GM12878 (cell line): ENCODE measurements at regions of chr7 and their contacts with region 1.

Region 1: DNA sequence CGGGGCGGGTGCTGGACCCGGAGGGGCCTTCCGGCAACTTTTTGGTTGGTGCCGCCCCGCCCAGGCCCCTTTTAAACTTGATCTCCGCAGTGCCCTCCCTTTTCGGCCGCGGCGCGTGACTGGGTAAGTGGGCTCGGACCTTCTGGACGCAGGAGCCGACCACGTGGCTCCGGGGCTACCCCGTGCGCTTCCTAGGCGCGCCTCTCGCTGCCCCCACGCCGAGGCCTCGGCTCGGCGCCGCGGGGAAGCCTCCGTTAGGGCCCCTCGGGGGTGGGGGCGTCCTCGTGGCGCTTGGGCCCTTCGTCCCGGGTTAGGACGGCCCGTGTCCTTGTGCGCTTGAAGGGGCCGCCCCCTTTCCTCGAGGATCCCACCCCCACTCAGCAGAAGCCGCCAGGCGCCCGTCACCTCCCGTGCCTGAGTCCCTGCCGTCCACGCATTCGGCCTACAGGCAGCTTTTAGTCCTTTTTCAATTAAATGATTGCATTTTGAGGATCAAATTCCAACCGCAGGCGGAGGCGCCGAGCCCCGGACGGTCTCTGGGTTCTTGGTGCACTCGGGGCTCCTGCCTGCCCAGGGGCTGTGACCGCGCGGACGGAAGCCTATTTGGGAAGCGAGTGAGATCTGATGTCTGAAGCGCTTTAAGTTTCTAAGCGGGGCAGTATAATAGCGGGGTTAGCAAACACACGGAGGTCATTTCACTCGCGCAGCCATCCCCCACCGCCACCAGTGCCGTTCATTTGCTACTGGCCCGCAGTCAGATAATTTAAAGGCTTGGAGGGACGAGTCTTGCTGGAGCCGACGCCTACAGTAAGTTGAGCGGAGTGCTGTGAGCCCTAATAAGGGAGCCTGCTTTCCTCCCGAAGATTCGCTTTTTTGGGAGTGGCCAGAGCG is 31.8 kb upstream of the TOMM7 start:
- DNase-seq: peak; percentile 63
- ATAC-seq: peak; percentile 84
- H3K4me3 ChIP-seq: peak overlapping the region; percentile 84
- H3K27ac ChIP-seq: peak overlapping the region; percentile 94
- H3K4me1 ChIP-seq: peaks cover 14% of the 10 kb centered on the region
- H3K27me3 ChIP-seq: no peaks in the 10 kb centered on the region
- CTCF ChIP-seq: peak in 1 of 3 experiments; percentile 44; a peak in 1 of 6 replicates
- EP300 ChIP-seq: 0 out of 4 replicates have a peak, but pooled peaks of 1 of the 2 experiments have one; percentile 21
- POLR2A ChIP-seq: peak; percentile 89
- RAD21 ChIP-seq: no peak

Region 2: DNA sequence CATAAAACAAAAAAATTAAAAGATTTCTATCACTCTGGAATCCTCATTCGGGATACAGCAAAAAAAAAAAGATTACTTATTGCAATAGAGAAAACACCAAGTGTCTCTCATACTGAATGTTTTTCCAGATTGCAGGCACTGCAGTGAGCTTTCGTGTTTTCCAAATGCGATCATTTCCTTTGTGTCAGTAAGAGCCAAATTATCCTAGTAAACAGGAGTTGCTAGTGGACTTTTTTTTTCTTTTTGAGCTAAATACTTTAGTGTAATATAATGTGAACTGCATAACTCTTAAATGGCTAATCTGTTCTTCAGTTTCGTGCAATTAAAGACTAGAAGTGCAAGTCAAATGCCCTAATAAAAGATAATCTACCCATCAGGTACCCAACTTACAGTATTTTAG is 12.6 kb after region 1 on chr7:
- CTCF ChIA-PET with region 1: interaction called, 45 read pairs
- POLR2A ChIA-PET with region 1: interaction called, 20 read pairs
- RAD21 ChIA-PET with region 1: interaction called, 46 read pairs
- SMC1A ChIA-PET with region 1: interaction called, 34 read pairs
- in situ Hi-C with region 1: no loop called
- intact Hi-C with region 1: loop called (anchors 1 kb)
- DNase-seq: no peak
- ATAC-seq: no peak
- H3K4me3 ChIP-seq: no peak overlapping the region
- H3K27ac ChIP-seq: no peak overlapping the region
- H3K4me1 ChIP-seq: peaks cover 4% of the 10 kb centered on the region
- H3K27me3 ChIP-seq: no peaks in the 10 kb centered on the region
- CTCF ChIP-seq: no peak
- EP300 ChIP-seq: no peak
- POLR2A ChIP-seq: no peak
- RAD21 ChIP-seq: no peak

Region 3: GRCh38 chr7:22872096-22872807 is 17.8 kb after region 1 on chr7:
- CTCF ChIA-PET with region 1: interaction called, 45 read pairs
- POLR2A ChIA-PET with region 1: interaction called, 20 read pairs
- RAD21 ChIA-PET with region 1: interaction called, 46 read pairs
- SMC1A ChIA-PET with region 1: interaction called, 34 read pairs
- in situ Hi-C with region 1: no loop called
- intact Hi-C with region 1: loop called (anchors 1 kb)
- DNase-seq: peak; percentile 69
- ATAC-seq: peak; percentile 99
- H3K4me3 ChIP-seq: 0 out of 2 replicates have a peak overlapping the region, but pooled peaks have one; percentile 18
- H3K27ac ChIP-seq: peak overlapping the region; percentile 62
- H3K4me1 ChIP-seq: peaks cover 7% of the 10 kb centered on the region
- H3K27me3 ChIP-seq: no peaks in the 10 kb centered on the region
- CTCF ChIP-seq: no peak
- EP300 ChIP-seq: no peak
- POLR2A ChIP-seq: no peak; the same call in 1 of the 2 replicates
- RAD21 ChIP-seq: no peak

Region 4: DNA sequence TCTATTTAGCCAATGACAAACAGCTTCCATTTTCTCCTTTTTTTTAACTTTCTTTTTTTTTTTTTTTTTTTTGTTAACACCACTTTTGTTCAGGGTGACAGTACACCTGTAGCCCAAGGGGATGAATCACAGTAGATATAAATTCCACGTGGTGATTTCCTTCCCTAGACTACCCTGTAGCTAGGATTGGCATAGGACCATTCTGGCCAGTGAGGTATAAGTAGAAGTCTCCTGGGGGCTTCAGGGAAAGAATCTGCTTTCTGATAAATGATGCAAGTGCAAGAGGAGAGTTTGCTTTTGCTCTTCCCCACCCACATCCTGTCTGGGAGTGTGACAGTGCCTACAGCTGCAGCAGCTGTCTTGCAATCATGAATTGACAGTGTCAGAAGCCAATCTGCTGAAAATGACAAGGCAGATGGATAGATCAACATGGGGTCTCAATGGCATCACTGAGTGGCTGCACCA is 31.4 kb after region 1 on chr7:
- CTCF ChIA-PET with region 1: interaction called, 24 read pairs
- POLR2A ChIA-PET with region 1: interaction called, 23 read pairs
- RAD21 ChIA-PET with region 1: interaction called, 40 read pairs
- SMC1A ChIA-PET with region 1: interaction called, 39 read pairs
- in situ Hi-C with region 1: no loop called
- intact Hi-C with region 1: loop called (anchors 1 kb)
- DNase-seq: peak; percentile 88
- ATAC-seq: peak; percentile 90
- H3K4me3 ChIP-seq: no peak overlapping the region; the same call in 1 of the 2 replicates
- H3K27ac ChIP-seq: peak overlapping the region; percentile 91
- H3K4me1 ChIP-seq: peaks cover 15% of the 10 kb centered on the region
- H3K27me3 ChIP-seq: no peaks in the 10 kb centered on the region
- CTCF ChIP-seq: no peak
- EP300 ChIP-seq: peak; percentile 51 to 70; a peak in 2 of 4 replicates
- POLR2A ChIP-seq: peak; percentile 50
- RAD21 ChIP-seq: no peak

Region 5: GRCh38 chr7:22949944-22950343 is 95.5 kb after region 1 on chr7:
- CTCF ChIA-PET with region 1: interaction called, 4 read pairs
- POLR2A ChIA-PET with region 1: interaction called, 3 read pairs
- RAD21 ChIA-PET with region 1: no interaction called
- SMC1A ChIA-PET with region 1: interaction called, 3 read pairs
- in situ Hi-C with region 1: no loop called
- intact Hi-C with region 1: loop called (anchors 10 kb)
- DNase-seq: no peak
- ATAC-seq: no peak
- H3K4me3 ChIP-seq: no peak overlapping the region
- H3K27ac ChIP-seq: no peak overlapping the region
- H3K4me1 ChIP-seq: no peaks in the 10 kb centered on the region
- H3K27me3 ChIP-seq: no peaks in the 10 kb centered on the region
- CTCF ChIP-seq: no peak
- EP300 ChIP-seq: no peak
- POLR2A ChIP-seq: no peak
- RAD21 ChIP-seq: no peak

Region 6: GRCh38 chr7:23000597-23001360 is 146.4 kb after region 1 on chr7:
- CTCF ChIA-PET with region 1: interaction called, 3 read pairs
- POLR2A ChIA-PET with region 1: interaction called, 5 read pairs
- RAD21 ChIA-PET with region 1: interaction called, 17 read pairs
- SMC1A ChIA-PET with region 1: interaction called, 17 read pairs
- in situ Hi-C with region 1: no loop called
- intact Hi-C with region 1: no loop called
- DNase-seq: no peak
- ATAC-seq: no peak
- H3K4me3 ChIP-seq: no peak overlapping the region
- H3K27ac ChIP-seq: peak overlapping the region; percentile 83
- H3K4me1 ChIP-seq: peaks cover 39% of the 10 kb centered on the region
- H3K27me3 ChIP-seq: no peaks in the 10 kb centered on the region
- CTCF ChIP-seq: no peak
- EP300 ChIP-seq: no peak
- POLR2A ChIP-seq: no peak
- RAD21 ChIP-seq: no peak

Region 7: DNA sequence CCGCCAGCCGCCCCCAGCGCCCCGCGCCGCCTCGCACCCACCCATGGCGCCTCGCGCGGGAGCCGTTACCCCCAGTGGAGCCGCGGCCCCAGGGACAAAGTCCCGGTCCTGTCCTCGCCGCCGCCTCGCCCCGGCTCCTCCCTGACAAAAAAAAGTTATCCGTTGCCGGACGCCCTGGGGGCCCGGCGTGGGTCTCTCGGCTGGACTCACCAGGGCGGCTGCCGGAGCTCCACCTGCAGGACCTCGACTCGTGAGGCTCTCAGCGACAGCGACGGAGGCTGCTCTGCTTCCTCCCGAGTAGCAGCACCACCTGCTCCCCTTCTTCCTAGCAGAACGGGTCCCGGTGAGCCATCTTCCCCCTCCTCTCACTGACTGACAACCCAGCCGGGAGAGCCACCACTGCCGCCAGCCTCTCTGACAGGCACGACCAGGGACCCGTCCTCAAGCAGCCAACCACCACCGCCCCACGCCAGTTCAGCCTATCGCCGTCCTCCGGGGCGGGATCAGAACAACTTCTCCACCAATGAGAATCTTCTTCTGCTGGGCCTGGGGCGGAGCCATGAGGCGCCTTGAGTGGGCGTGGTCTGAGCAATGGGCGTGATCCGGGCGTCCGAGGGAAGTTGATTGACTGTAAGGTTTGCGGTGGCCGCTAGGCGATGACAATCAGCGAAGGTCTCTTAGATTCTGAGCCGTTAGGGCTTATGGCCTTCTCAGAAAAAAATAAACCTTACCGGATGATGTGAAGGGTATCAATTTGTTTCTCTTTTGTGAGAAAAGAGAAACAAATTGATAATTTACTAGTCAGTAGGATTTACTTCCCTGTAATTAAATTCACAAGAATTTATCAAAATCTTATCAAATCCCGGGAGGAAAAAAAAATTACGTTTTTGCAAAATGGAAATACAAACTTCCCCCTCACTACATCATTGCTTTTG is 159.6 kb after region 1 on chr7 and contains the start of gene HYCC1:
- CTCF ChIA-PET with region 1: interaction called, 11 read pairs
- POLR2A ChIA-PET with region 1: interaction called, 18 read pairs
- RAD21 ChIA-PET with region 1: interaction called, 22 read pairs
- SMC1A ChIA-PET with region 1: interaction called, 13 read pairs
- in situ Hi-C with region 1: no loop called
- intact Hi-C with region 1: loop called (anchors 2 kb)
- DNase-seq: peak; percentile 98
- ATAC-seq: peak; percentile 94
- H3K4me3 ChIP-seq: peak within 1 kb of the TSS; percentile 95
- H3K27ac ChIP-seq: peak within 1 kb of the TSS; percentile 74
- H3K4me1 ChIP-seq: peaks cover 20% of the 10 kb centered on the region
- H3K27me3 ChIP-seq: no peaks in the 10 kb centered on the region
- CTCF ChIP-seq: peak; percentile 62 to 64 (median 64)
- EP300 ChIP-seq: no peak
- POLR2A ChIP-seq: peak; percentile 99
- RAD21 ChIP-seq: peak; percentile 34; the same call in 1 of the 2 replicates
- polyA plus RNA-seq, gene HYCC1: 8.5 to 9.9 TPM